Mammary epithelial cell (primary cell): ENCODE measurements at regions of chr22 and their contacts with region 1.

Region 1: DNA sequence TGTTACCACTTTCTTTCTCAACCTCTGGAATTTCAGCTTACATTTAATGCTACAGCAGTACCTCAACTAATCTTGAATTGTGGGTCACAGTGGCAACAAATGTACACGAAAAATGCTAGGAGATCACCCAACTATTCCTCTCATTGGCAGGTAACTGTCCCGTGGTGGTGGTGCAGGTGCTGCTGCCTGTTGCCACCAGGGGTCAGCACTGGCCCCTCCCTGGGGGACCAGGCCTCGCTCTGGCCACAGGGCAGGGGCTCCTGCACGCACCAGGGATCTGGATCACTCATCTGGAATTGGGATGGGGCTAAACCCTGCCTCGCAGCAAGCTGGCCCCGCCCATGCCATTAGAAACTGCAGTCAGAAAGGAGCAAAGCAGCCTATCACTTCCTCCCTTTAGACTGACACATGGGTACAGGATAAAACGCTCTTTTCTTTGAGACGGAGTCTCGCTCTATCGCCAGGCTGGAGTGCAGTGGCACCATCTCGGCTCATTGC is 6.9 kb upstream of the POLDIP3 start:
- DNase-seq: peak; percentile 55
- H3K4me3 ChIP-seq: no peak overlapping the region
- H3K27ac ChIP-seq: peak overlapping the region; percentile 53
- H3K4me1 ChIP-seq: peaks cover 24% of the 10 kb centered on the region
- H3K27me3 ChIP-seq: no peaks in the 10 kb centered on the region
- CTCF ChIP-seq: peak; percentile 90 to 96

Region 2: GRCh38 chr22:42688241-42689211 is 67.0 kb after region 1 on chr22:
- CTCF ChIA-PET with region 1: no interaction called
- dilution Hi-C with region 1: no loop called
- in situ Hi-C with region 1: no loop called
- intact Hi-C with region 1: no loop called
- DNase-seq: peak; percentile 83
- H3K4me3 ChIP-seq: no peak overlapping the region
- H3K27ac ChIP-seq: peak overlapping the region; percentile 59
- H3K4me1 ChIP-seq: peaks cover 16% of the 10 kb centered on the region
- H3K27me3 ChIP-seq: no peaks in the 10 kb centered on the region
- CTCF ChIP-seq: no peak

Region 3: GRCh38 chr22:42820066-42820763 is 198.7 kb after region 1 on chr22:
- CTCF ChIA-PET with region 1: interaction called, 3 read pairs
- dilution Hi-C with region 1: no loop called
- in situ Hi-C with region 1: no loop called
- intact Hi-C with region 1: loop called (anchors 5 kb)
- DNase-seq: peak; percentile 82
- H3K4me3 ChIP-seq: no peak overlapping the region
- H3K27ac ChIP-seq: no peak overlapping the region
- H3K4me1 ChIP-seq: peaks cover 10% of the 10 kb centered on the region
- H3K27me3 ChIP-seq: no peaks in the 10 kb centered on the region
- CTCF ChIP-seq: peak; percentile 61 to 76

Region 4: DNA sequence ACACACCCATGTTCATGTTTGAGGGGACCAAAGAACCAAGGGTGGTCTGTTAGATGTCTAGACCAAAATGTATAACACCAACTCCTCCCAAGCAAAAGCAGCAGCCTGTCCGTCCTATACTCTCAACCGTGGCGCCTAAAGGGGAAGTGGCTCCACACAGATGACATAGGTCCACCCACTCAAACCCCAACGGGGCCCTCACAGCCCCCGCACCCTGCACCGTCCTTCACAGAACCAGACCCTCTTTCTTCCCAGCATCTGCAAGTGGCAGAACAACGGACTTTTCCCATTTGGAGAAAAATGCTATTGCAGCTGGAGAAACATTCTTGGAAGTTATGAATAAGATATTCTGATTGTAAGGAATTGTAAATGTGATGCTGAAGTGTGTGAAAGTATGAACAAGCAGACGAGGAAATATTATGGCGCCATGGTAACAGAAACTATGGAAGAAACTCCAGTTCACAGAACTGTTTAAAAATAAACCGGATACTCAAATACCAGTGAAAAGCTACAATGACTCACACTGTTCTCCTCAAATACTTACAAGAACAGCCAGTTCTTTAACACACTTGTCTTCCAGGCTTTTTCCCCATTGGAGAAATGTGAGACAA is 312.0 kb after region 1 on chr22:
- CTCF ChIA-PET with region 1: no interaction called
- dilution Hi-C with region 1: no loop called
- in situ Hi-C with region 1: no loop called
- intact Hi-C with region 1: no loop called
- DNase-seq: peak; percentile 90
- H3K4me3 ChIP-seq: peak overlapping the region in 2 of 3 experiments; percentile 22 to 25
- H3K27ac ChIP-seq: peak overlapping the region; percentile 98
- H3K4me1 ChIP-seq: peaks cover 66% of the 10 kb centered on the region
- H3K27me3 ChIP-seq: no peaks in the 10 kb centered on the region
- CTCF ChIP-seq: no peak